ENCODE measurements at regions of chr19 and their contacts with region 1.

Region 1: DNA sequence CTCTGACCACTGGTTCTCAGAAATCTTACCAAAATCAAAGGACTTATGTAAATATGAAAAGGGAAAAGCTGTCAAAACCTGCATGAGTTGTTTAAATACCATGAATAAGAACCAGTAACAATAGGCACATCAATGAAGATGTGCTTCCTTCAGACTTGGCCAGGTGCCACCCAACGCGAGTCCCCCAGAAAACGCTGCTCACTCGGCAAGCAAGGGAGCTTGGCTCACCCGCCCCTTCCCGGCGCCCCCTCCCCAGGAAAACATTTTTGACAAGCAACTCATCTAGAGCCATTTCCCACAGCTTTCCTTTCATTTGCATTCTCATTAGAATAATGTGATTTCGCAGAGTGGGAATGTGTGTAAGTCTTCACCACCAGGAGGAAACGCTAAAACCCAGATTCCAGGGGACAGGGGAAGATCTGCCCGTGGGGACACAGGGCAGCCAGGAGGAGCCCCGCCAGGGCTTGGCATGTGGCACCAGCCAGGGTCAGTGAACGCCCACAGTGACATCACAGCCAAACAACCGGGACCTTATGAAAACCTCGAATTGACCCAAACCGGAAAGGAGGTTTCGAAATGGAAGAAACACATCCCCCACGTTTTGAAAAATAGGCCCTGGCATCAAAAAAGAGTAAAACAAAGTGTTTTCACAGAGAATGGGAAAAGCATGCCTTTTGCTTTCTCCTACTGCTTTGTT is 366.2 kb upstream of the TSHZ3 start:
- DNase-seq: no peak
- H3K4me3 ChIP-seq: no peak overlapping the region
- H3K27ac ChIP-seq: no peak overlapping the region
- H3K4me1 ChIP-seq: peaks cover 0 to 26% (median 19%) of the 10 kb centered on the region in 4 donors
- H3K27me3 ChIP-seq: no peaks in the 10 kb centered on the region
- CTCF ChIP-seq: no peak
- EP300 ChIP-seq: no peak
- POLR2A ChIP-seq: no peak

Region 2: GRCh38 chr19:32041681-32042292 is 326.4 kb after region 1 on chr19:
- intact Hi-C with region 1: loop called (anchors 5 kb)
- DNase-seq: no peak
- H3K4me3 ChIP-seq: peak overlapping the region; percentile 29 to 47 (median 32)
- H3K27ac ChIP-seq: no peak overlapping the region
- H3K4me1 ChIP-seq: peaks cover 0 to 35% (median 26%) of the 10 kb centered on the region in 4 donors
- H3K27me3 ChIP-seq: peaks cover 0 to 31% (median 2%) of the 10 kb centered on the region in 4 donors
- CTCF ChIP-seq: peak; percentile 69 to 89 (median 81)
- EP300 ChIP-seq: no peak
- POLR2A ChIP-seq: no peak

Measured in esophagus muscularis mucosa (tissue), 4 donors.